Activated CD4-positive, alpha-beta T cell treated with anti-CD3 and anti-CD28 coated beads for 36 hours (primary cell): ENCODE measurements at regions of chr1 and their contacts with region 1.

Region 1: DNA sequence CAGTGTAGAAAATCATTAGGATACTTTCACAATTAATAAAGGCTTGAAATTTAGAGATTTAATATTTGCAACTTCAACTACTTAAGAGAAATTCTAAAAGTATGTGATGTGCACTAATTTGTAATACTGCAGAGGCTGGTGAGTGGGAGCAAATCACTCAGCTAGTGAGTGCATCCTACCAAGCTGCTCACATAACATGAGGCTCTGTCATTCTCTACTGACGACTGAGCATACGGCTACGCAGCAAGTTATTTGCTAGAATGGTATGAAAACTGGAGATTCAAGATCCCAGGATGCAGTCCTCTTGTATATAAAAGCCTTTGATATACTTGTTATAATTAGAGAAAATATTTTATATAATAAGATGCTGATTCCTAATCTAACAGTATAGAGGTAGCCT is 90.1 kb downstream of the ATP1B1 start:
- DNase-seq: no peak
- ATAC-seq: no peak
- H3K4me3 Mint-ChIP-seq: no peak overlapping the region
- H3K27ac Mint-ChIP-seq: no peak overlapping the region
- H3K4me1 Mint-ChIP-seq: no peaks in the 10 kb centered on the region
- H3K27me3 Mint-ChIP-seq: no peaks in the 10 kb centered on the region

Region 2: DNA sequence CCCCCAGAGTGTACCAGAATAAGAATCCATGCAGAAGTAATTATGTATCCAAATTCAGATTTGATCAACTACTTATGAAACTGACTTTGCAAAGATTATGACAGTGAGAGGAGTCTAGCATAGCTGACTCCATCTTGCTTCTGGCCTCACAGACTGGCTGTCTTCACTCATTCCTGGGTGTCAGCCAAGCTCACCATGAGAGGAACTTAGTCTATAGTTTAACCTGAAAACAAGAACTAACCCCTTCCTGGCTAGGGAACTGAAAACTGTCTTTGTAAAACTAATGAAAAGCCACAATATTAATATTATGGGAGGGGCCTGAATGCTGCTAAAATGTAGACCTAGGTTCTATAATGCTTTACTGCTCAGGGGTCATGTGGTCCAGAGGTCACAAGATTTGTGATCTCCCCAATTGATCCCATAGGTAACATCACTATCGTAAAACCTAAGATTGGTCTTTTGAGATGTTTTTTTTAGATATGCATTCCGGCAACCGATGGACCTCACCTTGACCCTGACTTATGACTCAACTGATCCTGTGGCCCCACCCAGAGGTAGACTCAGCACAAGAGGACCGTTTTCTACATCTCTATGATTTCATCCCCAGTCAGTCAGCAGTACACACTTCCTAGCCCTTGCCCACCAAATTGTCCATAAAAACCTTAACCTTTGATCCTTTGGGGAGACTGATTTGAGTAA is 34.9 kb before region 1 on chr1:
- CTCF ChIA-PET with region 1: no interaction called
- POLR2A ChIA-PET with region 1: no interaction called
- intact Hi-C with region 1: no loop called
- DNase-seq: no peak
- ATAC-seq: no peak
- H3K4me3 Mint-ChIP-seq: no peak overlapping the region
- H3K27ac Mint-ChIP-seq: no peak overlapping the region
- H3K4me1 Mint-ChIP-seq: peaks cover 8% of the 10 kb centered on the region
- H3K27me3 Mint-ChIP-seq: no peaks in the 10 kb centered on the region

Region 3: DNA sequence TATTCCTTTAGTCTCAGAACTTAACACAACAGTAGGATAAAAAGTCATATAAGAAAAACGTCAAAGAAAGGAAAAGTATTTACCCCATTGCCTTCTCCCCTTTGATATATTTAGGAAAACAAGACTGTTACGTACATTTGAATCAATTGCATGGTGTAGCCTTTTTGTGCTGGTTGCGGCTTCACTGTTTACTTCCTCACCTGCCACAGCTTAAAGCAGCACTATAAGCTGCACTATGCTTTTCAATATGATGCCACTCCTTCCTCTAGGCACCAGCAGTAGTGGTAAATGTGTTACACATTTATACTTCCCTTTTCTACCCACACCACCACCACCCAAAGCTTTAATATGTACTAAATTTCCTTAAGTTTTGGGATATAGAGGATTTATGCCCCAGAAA is 21.1 kb after region 1 on chr1:
- CTCF ChIA-PET with region 1: no interaction called
- POLR2A ChIA-PET with region 1: no interaction called
- intact Hi-C with region 1: loop called in 1 of 2 experiments (anchors 2 kb)
- DNase-seq: no peak
- ATAC-seq: no peak
- H3K4me3 Mint-ChIP-seq: no peak overlapping the region
- H3K27ac Mint-ChIP-seq: no peak overlapping the region
- H3K4me1 Mint-ChIP-seq: no peaks in the 10 kb centered on the region
- H3K27me3 Mint-ChIP-seq: no peaks in the 10 kb centered on the region